Right cardiac atrium (tissue), 5 donors: ENCODE measurements at regions of chr6 and their contacts with region 1.

Region 1: GRCh38 chr6:31135710-31136109 is 3.2 kb downstream of the PSORS1C2 start:
- DNase-seq: no peak
- ATAC-seq: no peak
- H3K4me3 ChIP-seq: no peak overlapping the region
- H3K27ac ChIP-seq: no peak overlapping the region
- H3K4me1 ChIP-seq: peaks cover 6% of the 10 kb centered on the region
- H3K27me3 ChIP-seq: no peaks in the 10 kb centered on the region

Region 2: DNA sequence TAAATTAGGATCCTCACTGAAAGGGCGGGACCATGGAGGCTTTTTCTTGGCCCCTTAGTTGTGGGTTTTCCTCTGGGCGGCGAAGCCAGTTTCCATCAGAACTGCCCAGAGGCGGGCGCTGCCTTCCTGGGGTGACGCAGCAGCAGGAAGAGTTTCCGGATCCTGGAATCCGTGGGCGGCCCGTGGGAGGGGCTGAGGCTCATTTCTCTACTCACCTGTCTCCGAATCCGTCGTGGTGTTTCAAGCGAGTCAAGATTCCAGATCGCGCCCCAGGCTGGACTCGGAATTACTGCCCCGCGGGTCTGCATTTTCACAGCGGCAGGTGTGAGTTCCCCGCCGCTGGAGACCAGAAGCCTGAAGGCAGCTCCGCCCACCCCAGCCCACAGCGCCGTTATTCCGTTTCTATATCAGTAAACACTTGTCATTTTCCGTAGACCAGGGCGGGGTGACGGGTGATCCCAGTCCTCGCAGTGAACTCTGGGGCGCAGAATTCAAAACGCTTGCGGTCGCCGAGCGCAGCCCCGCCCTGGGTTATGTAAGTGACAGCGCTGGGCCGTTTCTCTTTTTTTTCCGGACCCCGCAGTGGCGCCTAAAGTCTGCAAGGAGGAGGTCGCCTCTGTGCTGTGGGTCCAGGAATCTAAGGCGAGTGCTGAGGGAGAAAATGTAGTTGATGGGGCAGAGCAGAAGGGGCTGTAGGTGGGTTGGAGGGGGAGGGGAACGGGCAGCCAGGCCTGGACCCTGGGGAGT is 62.0 kb after region 1 on chr6:
- intact Hi-C with region 1: loop called in 3 of 4 experiments (anchors 2 to 5 kb)
- DNase-seq: peak; percentile 93 to 97 (median 96)
- ATAC-seq: peak; percentile 93 to 94
- H3K4me3 ChIP-seq: peak overlapping the region; percentile 67
- H3K27ac ChIP-seq: peak overlapping the region; percentile 96
- H3K4me1 ChIP-seq: no peaks in the 10 kb centered on the region
- H3K27me3 ChIP-seq: no peaks in the 10 kb centered on the region